Activated CD4-positive, alpha-beta memory T cell treated with anti-CD3 and anti-CD28 coated beads for 36 hours (primary cell): ENCODE measurements at regions of chr1 and their contacts with region 1.

Region 1: DNA sequence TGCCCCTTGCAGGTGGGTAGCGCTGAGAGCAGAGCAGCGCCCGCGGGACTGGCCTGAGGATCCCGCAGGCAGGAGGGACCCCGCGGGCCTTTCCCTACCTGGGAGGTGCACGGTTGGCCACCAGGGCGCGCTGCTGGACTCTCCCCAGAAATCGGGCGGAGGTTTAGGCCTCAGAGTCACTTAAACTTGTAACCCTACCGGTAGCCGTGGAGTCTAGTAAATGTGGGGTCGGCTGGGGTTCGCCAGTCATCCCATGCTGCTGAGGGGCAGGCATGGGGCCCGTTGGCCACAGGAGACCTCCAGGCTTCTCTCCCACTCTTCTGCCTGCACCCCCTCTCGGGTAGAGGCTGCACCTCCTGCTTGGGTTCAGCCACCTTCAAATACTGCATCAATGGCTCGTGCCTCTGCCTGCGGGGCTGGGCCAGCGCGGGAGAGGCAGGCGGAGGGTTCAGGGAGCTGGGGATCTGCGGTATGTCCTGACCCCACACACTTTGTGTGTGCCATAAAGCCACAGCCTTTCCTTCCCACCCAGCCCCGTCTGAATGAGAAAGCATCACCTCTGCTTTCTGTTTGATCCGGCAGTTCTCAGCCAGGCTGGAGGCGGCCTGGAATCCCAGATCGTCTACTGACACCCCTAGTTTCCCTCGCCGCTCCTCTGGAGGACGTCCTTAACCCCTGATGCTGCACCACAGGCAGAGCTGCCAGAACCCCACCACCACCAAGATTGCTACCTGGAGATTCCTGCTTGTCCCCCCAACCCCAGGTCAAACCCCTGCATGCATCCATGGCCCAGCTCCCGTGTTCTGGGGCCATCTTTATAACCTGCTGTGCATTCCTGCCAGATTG is 12.3 kb upstream of the GSTM4 start:
- DNase-seq: peak; percentile 93
- H3K4me3 Mint-ChIP-seq: no peak overlapping the region
- H3K27ac Mint-ChIP-seq: no peak overlapping the region
- H3K4me1 Mint-ChIP-seq: peaks cover 3% of the 10 kb centered on the region
- H3K27me3 Mint-ChIP-seq: no peaks in the 10 kb centered on the region

Region 2: DNA sequence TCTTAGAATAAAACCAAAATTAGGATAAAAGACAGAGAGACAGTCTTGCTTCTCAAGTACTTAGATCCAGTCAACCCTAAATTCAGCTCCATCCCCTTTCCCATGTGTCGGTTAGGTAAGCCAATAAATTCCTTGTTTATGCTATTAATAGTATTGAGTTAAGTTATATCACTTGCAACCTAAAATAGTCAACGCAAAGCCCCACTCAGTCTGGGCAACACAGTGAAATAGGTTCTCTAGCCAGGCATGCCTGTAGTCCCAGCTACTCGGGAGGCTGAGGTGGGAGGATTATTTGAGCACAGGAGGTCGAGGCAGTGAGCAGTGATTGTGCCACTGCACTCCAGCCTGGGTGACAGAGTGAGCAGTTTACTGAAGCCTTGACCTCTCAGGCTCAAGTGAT is 582.4 kb before region 1 on chr1:
- CTCF ChIA-PET with region 1: no interaction called
- POLR2A ChIA-PET with region 1: no interaction called
- intact Hi-C with region 1: no loop called
- DNase-seq: no peak
- H3K4me3 Mint-ChIP-seq: no peak overlapping the region
- H3K27ac Mint-ChIP-seq: no peak overlapping the region
- H3K4me1 Mint-ChIP-seq: no peaks in the 10 kb centered on the region
- H3K27me3 Mint-ChIP-seq: no peaks in the 10 kb centered on the region

Region 3: GRCh38 chr1:109370712-109371455 is 272.7 kb before region 1 on chr1:
- CTCF ChIA-PET with region 1: no interaction called
- POLR2A ChIA-PET with region 1: no interaction called
- intact Hi-C with region 1: no loop called
- DNase-seq: no peak
- H3K4me3 Mint-ChIP-seq: no peak overlapping the region
- H3K27ac Mint-ChIP-seq: no peak overlapping the region
- H3K4me1 Mint-ChIP-seq: peaks cover 20% of the 10 kb centered on the region
- H3K27me3 Mint-ChIP-seq: peaks cover 22% of the 10 kb centered on the region

Region 4: DNA sequence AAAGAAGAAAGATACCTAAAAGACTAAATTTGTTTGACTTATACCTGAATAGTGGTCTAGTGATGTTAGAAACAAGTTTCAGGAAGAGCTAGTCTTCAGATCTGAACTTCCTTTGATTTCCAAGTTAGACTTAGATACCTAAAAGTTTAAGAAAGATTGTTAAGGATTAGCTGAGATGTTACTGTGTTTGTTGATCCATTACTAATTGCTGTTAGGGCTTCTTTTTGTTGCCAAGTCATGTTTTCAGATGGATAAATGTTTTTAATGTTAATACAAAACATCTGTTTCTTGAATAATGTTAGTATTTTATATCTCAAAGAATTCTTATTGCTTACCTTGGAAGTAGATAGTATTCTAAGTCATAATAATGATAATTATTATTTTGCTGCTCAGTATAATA is 83.6 kb before region 1 on chr1:
- CTCF ChIA-PET with region 1: interaction called, 12 read pairs
- POLR2A ChIA-PET with region 1: no interaction called
- intact Hi-C with region 1: no loop called
- DNase-seq: no peak
- H3K4me3 Mint-ChIP-seq: no peak overlapping the region
- H3K27ac Mint-ChIP-seq: no peak overlapping the region
- H3K4me1 Mint-ChIP-seq: peaks cover 58% of the 10 kb centered on the region
- H3K27me3 Mint-ChIP-seq: no peaks in the 10 kb centered on the region

Region 5: DNA sequence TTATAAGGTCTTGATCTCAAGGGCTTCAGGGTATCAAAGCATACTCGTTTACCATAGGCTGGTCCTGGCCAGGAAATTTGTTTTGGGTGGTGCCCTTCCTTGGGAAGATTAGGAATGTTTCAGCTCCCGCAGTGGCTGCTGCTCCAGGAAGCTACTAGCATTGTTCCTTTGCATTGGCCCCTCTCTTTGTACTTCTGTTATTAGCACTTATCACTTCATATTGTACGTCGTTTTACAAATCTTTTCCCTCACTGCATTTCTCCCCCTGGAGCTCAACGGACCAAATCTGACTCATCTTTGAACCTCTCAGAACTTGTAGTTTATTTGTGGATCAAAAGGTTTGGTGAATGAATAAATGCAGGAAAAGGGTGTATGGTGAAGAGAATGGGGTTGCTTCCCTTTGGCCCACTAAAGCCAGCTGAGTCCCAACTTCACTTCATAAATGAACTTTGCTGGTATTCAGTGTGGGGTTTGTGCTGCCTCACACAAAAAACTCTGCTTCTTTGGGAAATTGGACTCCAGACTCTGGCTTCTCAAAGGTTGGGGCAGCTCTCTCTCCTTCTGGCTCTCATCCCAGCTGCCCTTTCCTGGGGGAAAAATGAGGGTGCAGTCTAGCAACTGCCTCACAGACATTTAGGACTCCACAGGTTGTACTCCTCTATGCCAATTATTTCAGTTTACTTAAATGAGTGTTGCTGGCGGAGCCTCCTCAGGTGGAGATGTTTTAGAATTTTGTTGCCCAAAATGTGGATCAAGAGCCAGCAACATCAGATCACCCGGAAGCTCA is 30.1 kb before region 1 on chr1:
- CTCF ChIA-PET with region 1: interaction called, 26 read pairs
- POLR2A ChIA-PET with region 1: no interaction called
- intact Hi-C with region 1: no loop called
- DNase-seq: no peak
- H3K4me3 Mint-ChIP-seq: no peak overlapping the region
- H3K27ac Mint-ChIP-seq: no peak overlapping the region
- H3K4me1 Mint-ChIP-seq: peaks cover 25% of the 10 kb centered on the region
- H3K27me3 Mint-ChIP-seq: no peaks in the 10 kb centered on the region

Region 6: DNA sequence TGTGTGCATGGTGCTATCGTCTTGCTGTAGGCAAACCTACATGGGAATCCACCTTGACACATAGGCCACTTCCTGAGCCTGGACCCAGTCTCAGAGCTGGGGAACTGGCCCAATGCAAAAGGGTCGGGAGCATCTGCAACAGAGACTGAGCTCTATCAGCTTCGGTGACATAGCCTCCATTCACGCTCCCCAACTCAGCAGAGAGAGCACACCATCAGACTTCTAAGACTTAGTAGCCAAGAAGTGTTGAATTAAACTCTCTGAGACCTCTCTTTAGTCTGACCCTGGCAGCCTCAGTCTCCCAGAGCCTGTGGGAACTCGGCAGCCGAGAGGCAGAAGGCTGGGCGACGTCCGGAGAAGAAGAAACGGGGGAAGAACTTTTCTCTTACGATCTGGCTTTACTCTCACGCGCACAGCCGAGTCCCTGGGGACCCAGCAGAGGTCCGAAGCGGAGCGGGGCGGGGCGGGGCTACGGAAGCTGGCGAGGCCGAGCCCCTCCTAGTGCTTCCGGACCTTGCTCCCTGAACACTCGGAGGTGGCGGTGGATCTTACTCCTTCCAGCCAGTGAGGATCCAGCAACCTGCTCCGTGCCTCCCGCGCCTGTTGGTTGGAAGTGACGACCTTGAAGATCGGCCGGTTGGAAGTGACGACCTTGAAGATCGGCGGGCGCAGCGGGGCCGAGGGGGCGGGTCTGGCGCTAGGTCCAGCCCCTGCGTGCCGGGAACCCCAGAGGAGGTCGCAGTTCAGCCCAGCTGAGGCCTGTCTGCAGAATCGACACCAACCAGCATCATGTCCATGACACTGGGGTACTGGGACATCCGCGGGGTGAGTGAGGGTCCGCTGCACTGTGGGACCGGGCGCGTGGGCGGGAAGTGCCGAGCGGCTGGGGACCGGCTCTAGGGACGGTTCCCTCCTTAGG is 12.3 kb after region 1 on chr1 and contains the start of gene GSTM4:
- CTCF ChIA-PET with region 1: interaction called, 115 read pairs
- POLR2A ChIA-PET with region 1: no interaction called
- intact Hi-C with region 1: no loop called
- DNase-seq: peak; percentile 80
- H3K4me3 Mint-ChIP-seq: peak within 1 kb of the TSS; percentile 89
- H3K27ac Mint-ChIP-seq: peak within 1 kb of the TSS; percentile 66
- H3K4me1 Mint-ChIP-seq: peaks cover 12% of the 10 kb centered on the region
- H3K27me3 Mint-ChIP-seq: peaks cover 10% of the 10 kb centered on the region
- total RNA-seq, gene GSTM4: 8.2 to 12.0 TPM

Region 7: DNA sequence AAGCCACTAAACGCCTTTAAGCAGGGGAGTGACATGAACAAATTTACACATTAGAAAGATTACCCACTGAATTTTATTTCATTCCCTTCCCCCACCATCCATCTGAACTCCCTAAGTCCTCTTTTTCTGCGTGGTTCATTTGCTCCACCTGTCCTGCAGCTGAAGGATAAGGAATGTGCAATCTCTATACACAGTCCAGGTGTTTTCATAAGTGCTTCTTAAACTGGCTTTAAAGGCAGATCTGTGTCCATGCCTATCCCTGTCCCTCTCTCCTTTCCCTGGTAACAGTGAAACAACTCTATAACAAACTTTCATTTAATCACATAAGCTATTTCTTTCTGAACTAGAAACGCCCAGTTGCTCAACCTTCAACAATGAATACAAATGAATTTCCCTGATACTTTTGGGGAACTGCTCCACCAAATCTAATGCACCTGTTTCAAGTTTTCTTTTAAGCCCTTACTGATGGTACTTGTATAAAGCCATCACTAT is 88.8 kb after region 1 on chr1:
- CTCF ChIA-PET with region 1: interaction called, 13 read pairs
- POLR2A ChIA-PET with region 1: no interaction called
- intact Hi-C with region 1: no loop called
- DNase-seq: no peak
- H3K4me3 Mint-ChIP-seq: no peak overlapping the region
- H3K27ac Mint-ChIP-seq: no peak overlapping the region
- H3K4me1 Mint-ChIP-seq: no peaks in the 10 kb centered on the region
- H3K27me3 Mint-ChIP-seq: peaks cover 9% of the 10 kb centered on the region

Region 8: DNA sequence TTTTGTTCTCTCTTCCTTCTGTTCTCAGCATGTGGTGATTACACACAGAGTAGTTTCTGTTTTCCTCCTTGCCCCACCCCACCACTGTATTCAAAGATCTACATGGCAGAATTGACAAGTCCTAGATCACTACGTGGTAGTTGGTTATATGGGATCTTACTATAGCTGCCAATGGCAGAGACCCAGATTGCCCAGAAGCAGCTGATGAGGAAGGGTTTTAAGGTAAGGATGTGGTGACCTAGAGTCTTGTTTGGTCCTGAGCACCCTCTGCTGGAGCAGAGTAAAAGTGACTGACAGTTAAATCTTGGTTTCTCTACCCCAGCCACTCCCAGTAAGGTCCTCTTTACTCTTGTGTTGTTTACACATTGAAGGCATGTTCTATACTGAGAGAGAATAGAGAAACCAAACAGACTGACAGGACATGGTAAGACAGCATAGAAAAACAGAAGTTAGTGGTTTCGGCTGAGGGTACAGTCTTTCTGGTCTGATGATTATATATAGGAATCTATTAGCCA is 368.0 kb after region 1 on chr1:
- CTCF ChIA-PET with region 1: interaction called, 22 read pairs
- POLR2A ChIA-PET with region 1: no interaction called
- intact Hi-C with region 1: no loop called
- DNase-seq: peak; percentile 39
- H3K4me3 Mint-ChIP-seq: no peak overlapping the region
- H3K27ac Mint-ChIP-seq: no peak overlapping the region
- H3K4me1 Mint-ChIP-seq: no peaks in the 10 kb centered on the region
- H3K27me3 Mint-ChIP-seq: no peaks in the 10 kb centered on the region